Vagina (tissue), 2 donors: ENCODE measurements at regions of chr10 and their contacts with region 1.

Region 1: DNA sequence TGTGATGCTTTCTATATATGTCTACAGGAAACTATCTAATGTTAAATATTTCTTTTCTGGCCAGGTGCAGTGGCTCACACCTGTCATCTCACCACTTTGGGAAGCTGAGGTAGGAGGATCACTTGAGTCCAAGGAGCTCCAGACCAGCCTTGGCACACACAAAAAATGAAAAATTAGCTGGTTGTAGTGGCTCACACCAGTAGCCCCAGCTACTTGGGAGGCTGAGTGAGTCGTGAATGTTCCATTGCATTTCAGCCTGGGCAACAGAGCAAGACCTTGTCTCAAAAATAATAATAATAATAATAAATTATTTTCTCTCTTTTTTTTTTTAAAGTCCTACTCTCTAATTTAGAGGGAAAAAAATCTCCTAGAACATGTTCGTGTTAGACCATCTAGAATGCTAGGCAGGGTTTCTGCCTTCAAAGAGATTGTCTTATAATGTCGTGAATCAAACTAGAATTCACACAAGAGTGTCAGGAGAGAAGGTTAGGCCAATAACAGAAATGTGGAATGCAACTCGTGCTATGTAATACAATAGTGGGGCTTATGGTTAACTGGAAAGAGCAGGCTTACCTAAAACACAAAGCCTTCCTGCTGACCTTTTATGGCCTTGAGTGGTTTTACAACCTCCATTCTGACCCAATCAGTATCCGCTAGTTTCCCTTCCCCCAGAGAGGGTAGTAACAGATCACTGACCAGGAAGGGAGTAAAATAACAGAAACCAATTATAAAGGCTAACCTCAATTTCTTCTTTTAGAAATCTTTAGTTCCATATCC is 46.3 kb downstream of the MYOF start:
- DNase-seq: no peak
- H3K4me3 ChIP-seq: no peak overlapping the region
- H3K27ac ChIP-seq: peak overlapping the region; percentile 99
- H3K4me1 ChIP-seq: peaks cover 89% of the 10 kb centered on the region
- H3K27me3 ChIP-seq: no peaks in the 10 kb centered on the region
- CTCF ChIP-seq: no peak
- POLR2A ChIP-seq: no peak

Region 2: DNA sequence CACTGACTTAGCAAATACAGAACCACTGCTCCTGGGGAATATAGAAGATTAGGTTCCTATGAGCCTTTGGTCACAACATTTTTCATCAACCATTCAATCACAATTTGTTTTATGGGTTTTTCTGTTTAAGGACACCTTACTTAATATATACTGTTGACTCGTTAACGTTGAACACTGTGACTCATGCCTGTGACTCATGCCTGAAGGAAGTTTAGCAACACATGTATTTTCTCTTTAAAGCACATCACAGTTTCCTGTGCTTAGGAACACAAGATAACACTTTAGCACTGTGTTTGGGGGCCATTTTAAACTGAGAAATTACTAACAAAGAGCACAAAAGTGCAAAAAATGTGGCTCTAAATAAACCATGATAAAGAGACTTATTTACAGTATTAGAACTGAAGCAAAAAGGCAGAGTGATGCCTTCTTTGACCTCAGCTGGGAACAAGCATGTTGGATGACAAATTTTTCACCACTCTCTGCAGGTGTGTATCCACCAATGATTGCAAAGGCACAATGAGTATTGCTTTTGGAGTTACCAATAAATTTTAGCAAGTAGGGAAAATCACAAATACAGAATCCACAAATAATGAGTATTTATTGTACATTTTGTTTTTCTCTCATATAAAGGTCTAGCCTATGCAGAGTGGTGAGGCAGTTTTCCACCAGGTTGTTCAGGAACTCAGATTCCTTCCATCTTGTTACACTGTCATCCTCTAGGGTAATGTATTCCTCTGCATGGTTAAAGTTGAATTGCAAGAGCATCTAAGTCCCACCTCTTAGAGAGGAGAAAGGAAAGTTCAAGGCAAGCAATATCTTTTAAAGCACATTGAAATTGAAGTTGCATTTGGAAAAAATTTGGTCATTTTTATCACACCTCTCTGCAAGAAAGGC is 1533.8 kb before region 1 on chr10:
- intact Hi-C with region 1: loop called (anchors 5 kb)
- DNase-seq: no peak
- H3K4me3 ChIP-seq: no peak overlapping the region
- H3K27ac ChIP-seq: no peak overlapping the region
- H3K4me1 ChIP-seq: peaks cover 1% of the 10 kb centered on the region
- H3K27me3 ChIP-seq: no peaks in the 10 kb centered on the region
- CTCF ChIP-seq: no peak
- POLR2A ChIP-seq: no peak

Region 3: DNA sequence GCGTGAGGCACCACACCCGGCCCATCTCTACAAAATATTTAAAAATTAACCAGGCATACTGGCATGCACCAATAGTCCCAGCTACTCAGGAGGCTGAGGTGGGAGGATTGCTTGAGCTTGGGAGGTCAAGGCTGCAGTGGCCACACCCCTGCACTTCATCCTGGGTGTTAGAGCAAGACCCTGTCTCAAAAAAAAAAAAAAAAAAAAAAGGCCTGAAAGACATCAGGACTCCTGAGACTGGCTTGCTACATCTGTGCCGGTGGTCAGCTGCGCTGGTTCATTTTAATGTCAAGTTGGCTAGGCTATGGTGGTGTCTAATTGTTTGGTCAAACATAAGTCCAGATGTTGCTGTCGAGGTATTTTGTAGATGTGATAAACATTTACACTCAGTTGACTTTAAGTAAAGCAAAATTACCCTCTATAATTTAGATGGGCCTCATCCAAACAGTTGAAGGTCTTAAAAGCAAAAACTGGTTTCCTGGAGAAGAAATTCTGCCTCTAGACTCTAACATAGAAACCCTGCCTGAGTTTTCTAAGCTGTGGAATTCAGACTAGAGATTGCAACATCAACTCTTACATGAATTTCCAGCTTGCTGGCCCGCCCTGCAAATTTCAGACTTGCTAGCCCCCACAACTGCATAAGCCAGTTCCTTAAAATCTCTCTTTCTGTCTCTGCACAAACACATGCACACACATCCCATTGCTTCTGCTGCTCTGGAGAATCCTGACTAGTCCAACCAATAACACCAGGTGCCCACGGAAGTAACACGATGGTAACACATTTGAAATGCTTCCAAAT is 28.1 kb after region 1 on chr10:
- intact Hi-C with region 1: loop called (anchors 2 kb)
- DNase-seq: no peak
- H3K4me3 ChIP-seq: peak overlapping the region in 1 of 2 donors; percentile 6
- H3K27ac ChIP-seq: peak overlapping the region; percentile 94
- H3K4me1 ChIP-seq: peaks cover 90% of the 10 kb centered on the region
- H3K27me3 ChIP-seq: no peaks in the 10 kb centered on the region
- CTCF ChIP-seq: no peak
- POLR2A ChIP-seq: no peak

Region 4: DNA sequence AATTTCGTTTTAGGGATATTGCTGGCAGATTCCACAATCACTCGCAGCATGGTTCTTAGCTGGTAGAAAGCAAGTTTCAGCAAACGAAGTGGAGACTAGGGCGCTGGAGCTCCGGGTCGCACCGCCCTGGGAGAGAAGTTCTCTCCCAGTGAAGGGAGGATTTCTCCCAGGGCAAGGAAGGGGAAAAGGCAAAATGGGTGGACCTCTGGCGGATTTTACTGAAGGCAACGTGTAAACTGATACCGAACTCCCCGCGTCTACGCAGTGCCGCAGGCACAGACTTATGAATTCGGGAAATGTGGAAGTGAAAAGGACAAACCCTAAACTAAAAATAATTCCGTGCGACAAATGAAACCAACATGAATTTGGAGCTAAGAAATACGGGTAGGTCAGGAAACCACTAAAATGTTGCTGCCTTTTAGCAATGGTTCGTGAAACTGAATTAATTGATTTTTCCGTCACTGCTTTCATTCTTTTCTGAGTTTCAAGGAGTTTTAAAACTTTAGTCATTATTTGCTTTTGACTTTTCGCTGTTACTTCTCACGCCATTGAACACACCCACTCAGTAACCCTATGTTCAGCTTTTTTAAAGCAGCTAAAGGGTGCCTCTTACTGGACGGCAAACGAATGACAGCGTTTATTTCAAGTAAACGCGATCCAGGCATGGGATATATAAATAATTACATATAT is 46.5 kb after region 1 on chr10 and contains the start of gene MYOF:
- intact Hi-C with region 1: loop called (anchors 1 kb)
- DNase-seq: peak in 1 of 2 donors; percentile 91
- H3K4me3 ChIP-seq: peak within 1 kb of the TSS; percentile 54 to 62
- H3K27ac ChIP-seq: peak within 1 kb of the TSS; percentile 95
- H3K4me1 ChIP-seq: peaks cover 30% of the 10 kb centered on the region
- H3K27me3 ChIP-seq: no peaks in the 10 kb centered on the region
- CTCF ChIP-seq: peak in 2 of 3 experiments; percentile 46 to 62
- POLR2A ChIP-seq: peak in 1 of 2 donors; percentile 74
- total RNA-seq, gene MYOF: 107 TPM

Region 5: DNA sequence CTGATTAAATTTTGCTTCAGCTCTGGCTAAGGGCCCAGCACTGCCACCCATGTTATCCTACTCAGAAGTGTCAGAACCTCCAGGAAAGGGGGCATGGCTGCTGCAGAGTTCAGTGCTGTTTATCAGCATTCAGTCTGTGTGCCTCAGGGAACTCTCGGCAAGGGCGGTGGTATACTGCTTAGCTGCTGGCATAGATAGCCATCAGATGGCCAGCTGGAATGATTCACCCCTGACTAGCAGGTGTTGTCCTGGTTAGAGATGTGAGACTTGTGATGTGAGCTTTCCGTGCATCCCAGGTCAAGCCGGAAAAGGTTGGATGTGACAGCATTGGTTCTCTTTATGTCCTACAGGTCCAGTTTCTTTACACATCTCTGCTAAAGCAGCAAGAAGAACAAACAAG is 82.7 kb after region 1 on chr10:
- intact Hi-C with region 1: no loop called
- DNase-seq: no peak
- H3K4me3 ChIP-seq: no peak overlapping the region
- H3K27ac ChIP-seq: no peak overlapping the region
- H3K4me1 ChIP-seq: peaks cover 5% of the 10 kb centered on the region
- H3K27me3 ChIP-seq: no peaks in the 10 kb centered on the region
- CTCF ChIP-seq: no peak
- POLR2A ChIP-seq: no peak